ENCODE measurements at regions of chr10 and their contacts with region 1.

Region 1: GRCh38 chr10:114266520-114266919 is 27.5 kb downstream of the VWA2 start:
- DNase-seq: peak; percentile 42 to 47
- ATAC-seq: peak; percentile 52 to 84 (median 78)
- H3K4me3 ChIP-seq: no peak overlapping the region
- H3K27ac ChIP-seq: peak overlapping the region in 6 of 10 donors; percentile 56 to 77 (median 66)
- H3K4me1 ChIP-seq: peaks cover 0 to 38% (median 18%) of the 10 kb centered on the region in 9 donors
- H3K27me3 ChIP-seq: no peaks in the 10 kb centered on the region
- CTCF ChIP-seq: no peak

Region 2: DNA sequence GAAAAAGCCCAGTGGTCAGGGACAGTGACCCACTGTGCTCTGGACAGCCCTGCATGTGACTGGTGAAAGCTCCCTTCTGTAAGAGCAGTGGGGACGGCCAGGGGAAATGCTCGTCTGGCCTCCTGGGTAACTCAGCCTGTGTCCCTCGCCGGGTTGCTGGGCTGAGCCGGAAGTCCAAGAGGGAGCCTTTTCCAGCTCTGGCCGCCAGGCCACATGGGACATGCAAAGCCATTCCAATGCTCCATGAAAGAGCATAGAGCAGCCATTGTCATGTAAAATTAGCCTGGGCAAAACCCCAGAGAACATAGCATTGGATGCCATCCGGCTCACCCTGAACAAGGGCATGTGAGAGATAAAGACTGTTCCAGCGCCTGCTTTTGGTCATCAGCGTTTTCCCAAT is 287.7 kb before region 1 on chr10:
- intact Hi-C with region 1: no loop called
- DNase-seq: peak; percentile 32 to 41
- ATAC-seq: peak; percentile 69 to 92 (median 86)
- H3K4me3 ChIP-seq: no peak overlapping the region
- H3K27ac ChIP-seq: peak overlapping the region; percentile 2 to 77 (median 72)
- H3K4me1 ChIP-seq: peaks cover 0 to 26% (median 17%) of the 10 kb centered on the region in 9 donors
- H3K27me3 ChIP-seq: no peaks in the 10 kb centered on the region
- CTCF ChIP-seq: peak in 1 of 9 donors; percentile 10

Region 3: GRCh38 chr10:114173921-114174694 is 92.4 kb before region 1 on chr10 and contains the start of gene CCDC186:
- intact Hi-C with region 1: loop called in 1 of 10 experiments (anchors 10 kb)
- DNase-seq: peak; percentile 93
- ATAC-seq: peak; percentile 97 to 99 (median 98)
- H3K4me3 ChIP-seq: peak within 1 kb of the TSS; percentile 68 to 100 (median 92)
- H3K27ac ChIP-seq: peak within 1 kb of the TSS; percentile 84 to 98 (median 92)
- H3K4me1 ChIP-seq: peaks cover 0 to 35% (median 22%) of the 10 kb centered on the region in 9 donors
- H3K27me3 ChIP-seq: no peaks in the 10 kb centered on the region
- CTCF ChIP-seq: no peak
- total RNA-seq, gene CCDC186: 14.4 to 28.9 (median 20.5) TPM